PC-9 (cell line): ENCODE measurements at regions of chr7 and their contacts with region 1.

Region 1: GRCh38 chr7:157010588-157011332 is at the start of gene MNX1:
- DNase-seq: peak; percentile 74 to 82
- H3K4me3 ChIP-seq: peak within 1 kb of the TSS; percentile 96
- H3K27ac ChIP-seq: no peak within 1 kb of the TSS
- H3K4me1 ChIP-seq: peaks cover 12% of the 10 kb centered on the region
- H3K27me3 ChIP-seq: no peaks in the 10 kb centered on the region
- CTCF ChIP-seq: no peak
- total RNA-seq, gene MNX1: 0.28 and 0.33 TPM in 2 replicates

Region 2: GRCh38 chr7:156968183-156968582 is 42.6 kb before region 1 on chr7:
- CTCF ChIA-PET with region 1: no interaction called
- POLR2A ChIA-PET with region 1: no interaction called
- intact Hi-C with region 1: no loop called
- DNase-seq: no peak
- H3K4me3 ChIP-seq: no peak overlapping the region
- H3K27ac ChIP-seq: no peak overlapping the region
- H3K4me1 ChIP-seq: no peaks in the 10 kb centered on the region
- H3K27me3 ChIP-seq: no peaks in the 10 kb centered on the region
- CTCF ChIP-seq: no peak

Region 3: DNA sequence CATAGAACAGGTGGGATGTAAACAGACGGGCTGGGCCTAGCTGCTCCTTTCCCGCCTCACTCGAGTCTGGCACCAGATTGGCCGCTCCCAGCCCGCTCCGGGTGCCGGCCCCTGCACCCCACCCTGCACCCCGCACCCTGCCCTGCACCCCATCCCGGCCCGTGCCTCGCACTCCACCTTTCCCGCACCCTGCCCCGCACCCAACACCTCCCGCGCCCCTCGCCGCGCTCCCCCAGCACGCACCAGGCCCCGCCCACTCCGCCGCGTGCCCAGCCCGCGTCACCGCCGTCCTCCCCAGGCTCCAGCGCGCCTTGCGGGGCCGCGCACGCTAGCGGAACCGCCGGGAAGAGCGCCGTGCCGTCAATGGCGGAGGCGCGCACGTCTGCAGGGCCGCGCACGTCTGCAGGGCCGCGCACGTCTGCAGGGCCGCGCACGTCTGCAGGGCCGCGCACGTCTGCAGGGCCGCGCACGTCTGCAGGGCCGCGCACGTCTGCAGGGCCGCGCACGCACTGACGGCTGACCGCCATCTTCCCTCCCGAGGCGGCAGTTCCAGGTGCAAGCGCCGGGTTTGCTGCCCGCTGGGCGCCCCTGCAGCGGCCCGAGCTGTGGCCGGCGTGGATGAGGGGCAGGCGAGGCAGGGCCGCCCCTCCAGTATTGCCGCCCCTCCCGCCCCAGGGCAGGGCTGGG is 127.8 kb after region 1 on chr7 and contains the start of gene UBE3C:
- CTCF ChIA-PET with region 1: no interaction called
- POLR2A ChIA-PET with region 1: no interaction called
- intact Hi-C with region 1: loop called (anchors 10 kb)
- DNase-seq: peak; percentile 80 to 93
- H3K4me3 ChIP-seq: peak within 1 kb of the TSS; percentile 76
- H3K27ac ChIP-seq: peak within 1 kb of the TSS; percentile 88
- H3K4me1 ChIP-seq: peaks cover 31% of the 10 kb centered on the region
- H3K27me3 ChIP-seq: no peaks in the 10 kb centered on the region
- CTCF ChIP-seq: no peak
- total RNA-seq, gene UBE3C: 71.0 and 77.6 TPM in 2 replicates